A549 (cell line): ENCODE measurements at regions of chr22 and their contacts with region 1.

Region 1: DNA sequence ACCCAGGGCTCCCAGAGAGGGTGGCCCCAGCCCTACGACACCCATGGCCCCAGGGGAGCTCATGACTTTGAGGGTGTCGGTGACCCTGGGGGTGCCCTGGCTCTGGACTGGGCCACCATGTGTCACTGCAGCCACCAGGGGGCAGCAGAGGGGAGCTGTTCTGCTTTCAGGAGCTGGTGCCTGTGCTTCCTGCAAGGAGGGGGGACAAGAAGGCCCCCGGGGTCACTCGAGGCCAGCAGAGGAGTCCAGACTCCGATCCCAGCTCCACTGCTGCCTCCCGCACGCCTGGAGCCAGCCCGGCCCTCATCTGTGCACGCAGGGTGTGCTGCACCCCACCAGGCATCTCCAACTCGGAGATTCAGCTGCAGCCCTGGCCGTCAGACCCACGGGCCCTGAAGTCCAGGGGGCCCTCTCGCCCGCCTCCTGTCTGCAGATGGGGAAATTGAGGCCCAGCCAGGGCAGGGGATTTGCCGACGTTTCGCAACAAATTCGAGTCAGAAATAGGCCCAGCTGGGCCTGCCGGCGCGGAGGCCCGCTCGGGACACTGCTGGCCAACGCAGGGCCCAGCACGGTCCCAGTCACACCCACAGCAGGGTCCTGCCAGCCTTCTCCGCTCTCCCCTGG is 29.5 kb upstream of the WNT7B start:
- DNase-seq: peak; percentile 80 to 85
- ATAC-seq: peak; percentile 71 to 89
- H3K4me3 ChIP-seq: peak overlapping the region; percentile 35
- H3K27ac ChIP-seq: peak overlapping the region; percentile 94 to 99
- H3K4me1 ChIP-seq: peaks cover 31% of the 10 kb centered on the region
- CTCF ChIP-seq: peak; percentile 79
- EP300 ChIP-seq: no peak
- POLR2A ChIP-seq: no peak
- RAD21 ChIP-seq: peak; percentile 79 to 80

Region 2: GRCh38 chr22:45867118-45867905 is 139.2 kb before region 1 on chr22:
- CTCF ChIA-PET with region 1: no interaction called
- POLR2A ChIA-PET with region 1: no interaction called
- DNase-seq: no peak
- ATAC-seq: no peak
- H3K4me3 ChIP-seq: no peak overlapping the region
- H3K27ac ChIP-seq: no peak overlapping the region
- H3K4me1 ChIP-seq: peaks cover 18% of the 10 kb centered on the region
- CTCF ChIP-seq: no peak
- EP300 ChIP-seq: no peak
- POLR2A ChIP-seq: no peak
- RAD21 ChIP-seq: no peak

Region 3: DNA sequence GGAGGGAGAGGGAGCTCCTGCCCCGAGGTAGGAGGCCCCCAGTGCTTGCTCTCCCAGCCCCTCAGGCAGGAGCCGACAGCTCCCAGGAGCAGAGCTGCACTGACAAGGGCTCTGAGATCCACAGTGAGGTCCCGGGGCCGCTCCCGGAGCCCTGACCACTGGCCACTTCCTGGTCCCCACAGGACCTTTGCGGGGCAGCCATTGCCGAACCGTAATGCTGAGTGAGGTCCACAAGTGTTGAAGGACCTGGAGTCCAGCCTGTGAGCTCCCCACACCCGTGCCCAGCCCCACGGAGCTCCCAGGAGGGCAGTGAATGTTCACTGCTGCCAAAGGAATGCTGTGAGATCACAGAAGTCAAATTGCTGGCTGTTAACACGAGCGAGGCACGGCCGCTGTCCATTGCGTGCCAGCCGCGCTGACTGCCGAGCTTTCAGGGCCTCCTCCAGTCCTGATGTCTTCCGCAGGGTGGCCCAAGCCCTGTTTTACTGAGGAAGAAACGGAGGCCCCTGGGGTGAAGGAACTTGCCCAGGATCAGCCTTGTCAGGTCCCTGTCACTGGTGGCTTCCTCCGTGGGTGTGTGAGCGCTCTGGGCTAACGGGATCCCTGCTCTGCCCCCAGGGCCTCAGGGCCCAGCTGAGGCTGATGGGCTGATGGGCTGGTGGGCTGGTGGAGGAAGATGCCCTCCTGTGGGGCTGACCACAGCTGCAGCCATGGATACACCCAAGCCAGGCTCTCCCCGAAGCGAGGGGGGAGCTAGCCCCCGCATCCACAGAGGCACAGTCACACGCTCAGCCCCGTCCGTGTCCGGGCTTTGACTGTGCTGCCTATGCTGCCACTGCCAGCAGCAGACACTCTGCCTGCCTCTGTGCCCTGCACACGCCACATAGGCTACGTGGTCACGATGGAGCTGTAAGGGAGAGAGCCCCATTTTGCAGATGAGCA is 100.3 kb before region 1 on chr22:
- CTCF ChIA-PET with region 1: no interaction called
- POLR2A ChIA-PET with region 1: no interaction called
- DNase-seq: no peak
- ATAC-seq: no peak
- H3K4me3 ChIP-seq: no peak overlapping the region
- H3K27ac ChIP-seq: peak overlapping the region in 1 of 2 experiments; percentile 63; a peak in 3 of 6 replicates
- H3K4me1 ChIP-seq: peaks cover 28% of the 10 kb centered on the region
- CTCF ChIP-seq: no peak
- EP300 ChIP-seq: no peak
- POLR2A ChIP-seq: no peak
- RAD21 ChIP-seq: no peak

Region 4: DNA sequence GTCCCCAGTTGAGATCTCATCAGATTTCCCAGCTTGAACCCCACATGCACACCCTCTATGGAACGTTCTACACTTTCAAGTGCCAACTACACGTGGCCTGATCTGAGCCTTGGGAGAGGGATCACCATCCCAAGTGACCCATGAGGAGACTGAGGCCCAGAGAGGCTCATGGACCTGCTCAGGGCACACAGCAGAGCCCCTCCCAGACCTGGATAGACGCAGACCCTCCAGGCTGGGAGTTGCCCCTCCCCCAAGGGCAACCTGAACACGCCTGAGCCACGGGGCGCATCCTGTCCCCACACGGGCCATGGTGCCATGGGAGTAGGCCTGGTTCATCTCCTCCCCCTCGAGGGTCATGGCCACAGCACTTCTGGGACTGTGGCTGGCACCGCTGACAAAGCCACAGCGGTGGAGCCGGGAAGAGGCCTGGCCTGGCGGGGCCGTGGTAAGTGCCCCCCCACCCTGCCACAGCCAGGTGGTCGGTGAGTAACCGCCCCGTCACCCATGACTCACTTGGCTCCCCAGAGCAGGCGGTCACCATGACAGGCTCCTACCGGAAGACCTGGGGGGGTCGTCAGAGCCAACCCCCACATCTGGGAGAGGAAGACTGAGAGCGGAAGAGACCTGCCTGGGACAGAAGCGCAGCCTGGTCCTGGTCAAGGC is 37.6 kb before region 1 on chr22:
- CTCF ChIA-PET with region 1: no interaction called
- POLR2A ChIA-PET with region 1: no interaction called
- DNase-seq: peak in 1 of 2 experiments; percentile 77
- ATAC-seq: peak in 1 of 2 experiments; percentile 59; a peak in 3 of 6 replicates
- H3K4me3 ChIP-seq: peak overlapping the region; percentile 17; the same call in 1 of the 3 replicates
- H3K27ac ChIP-seq: peak overlapping the region; percentile 77 to 88
- H3K4me1 ChIP-seq: peaks cover 96% of the 10 kb centered on the region
- CTCF ChIP-seq: no peak
- EP300 ChIP-seq: peak; percentile 24 to 53; a peak in 2 of 5 replicates
- POLR2A ChIP-seq: no peak
- RAD21 ChIP-seq: 0 out of 5 replicates have a peak, but pooled peaks of 1 of the 2 experiments have one; percentile 43

Region 5: DNA sequence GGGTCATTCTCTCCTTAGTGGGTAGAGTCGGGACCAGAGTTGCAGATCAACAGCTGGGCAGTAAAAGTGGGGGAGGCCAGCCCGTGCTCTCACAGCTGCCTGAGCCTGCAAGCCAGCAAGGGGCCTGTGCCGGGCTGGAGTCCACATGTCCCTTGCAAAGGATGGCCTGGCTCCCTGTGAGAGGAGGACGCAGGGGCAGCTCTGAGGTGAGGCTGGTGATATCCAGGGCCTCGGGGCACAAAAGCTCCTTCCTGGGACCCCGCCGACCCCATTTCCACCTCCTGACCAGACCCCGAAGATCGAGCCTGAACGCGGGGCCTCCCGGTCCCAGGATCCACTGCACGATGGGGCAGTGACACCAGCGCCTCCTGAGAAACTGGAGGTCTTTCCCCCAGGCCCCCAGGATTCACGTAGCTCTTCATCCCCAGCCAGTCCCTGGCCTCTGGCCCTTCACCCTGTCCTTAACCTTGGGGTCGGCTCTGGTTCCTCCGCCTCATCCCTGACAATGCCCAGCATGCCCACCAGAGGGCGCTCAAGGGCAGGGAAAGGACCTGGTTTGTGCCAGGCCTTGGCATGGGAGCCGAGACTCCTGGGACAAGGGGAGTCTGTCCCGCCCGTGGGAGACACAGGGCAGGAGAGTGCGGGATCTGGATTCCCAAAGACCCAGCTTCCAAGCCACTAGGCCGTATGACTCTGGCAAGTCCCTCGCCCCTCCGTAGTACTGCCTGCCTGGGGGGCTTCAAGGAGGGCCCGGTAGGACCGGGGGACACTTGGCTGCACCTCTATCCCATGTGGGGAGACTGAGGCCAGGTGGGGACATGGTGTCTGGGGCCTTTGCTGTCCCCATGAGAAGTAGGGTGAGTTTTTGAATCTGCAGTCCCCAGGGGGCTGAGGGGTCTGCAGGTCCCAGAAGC is 11.7 kb before region 1 on chr22:
- CTCF ChIA-PET with region 1: interaction called, 52 read pairs
- POLR2A ChIA-PET with region 1: no interaction called
- DNase-seq: peak; percentile 49 to 55
- ATAC-seq: peak; percentile 74 to 90
- H3K4me3 ChIP-seq: no peak overlapping the region
- H3K27ac ChIP-seq: peak overlapping the region; percentile 51 to 72; a peak in 4 of 6 replicates
- H3K4me1 ChIP-seq: no peaks in the 10 kb centered on the region
- CTCF ChIP-seq: peak; percentile 75
- EP300 ChIP-seq: no peak
- POLR2A ChIP-seq: no peak
- RAD21 ChIP-seq: peak; percentile 88 to 93

Region 6: DNA sequence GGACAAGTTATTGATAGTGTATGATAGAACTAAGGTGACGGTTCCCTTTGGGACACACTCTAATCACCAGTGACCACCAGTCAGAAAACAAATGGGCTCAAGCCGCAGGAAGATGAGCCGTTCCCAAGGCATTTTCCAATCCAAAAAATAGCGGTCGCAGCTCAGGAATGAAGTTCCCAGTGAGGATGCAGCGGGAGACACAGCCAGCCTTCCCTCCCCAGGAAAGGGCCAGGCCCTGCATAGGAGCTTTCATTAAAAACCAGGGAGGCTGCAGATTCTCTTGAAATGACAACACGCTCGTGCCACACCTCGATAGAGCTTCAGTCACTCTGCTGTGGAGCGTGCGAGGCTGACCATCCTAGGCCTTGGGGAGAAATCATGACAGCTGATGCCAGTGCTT is 36.3 kb after region 1 on chr22:
- CTCF ChIA-PET with region 1: interaction called, 66 read pairs
- POLR2A ChIA-PET with region 1: no interaction called
- DNase-seq: no peak
- ATAC-seq: no peak
- H3K4me3 ChIP-seq: no peak overlapping the region
- H3K27ac ChIP-seq: no peak overlapping the region
- H3K4me1 ChIP-seq: no peaks in the 10 kb centered on the region
- CTCF ChIP-seq: no peak
- EP300 ChIP-seq: no peak
- POLR2A ChIP-seq: no peak
- RAD21 ChIP-seq: no peak

Region 7: GRCh38 chr22:46071451-46072109 is 65.1 kb after region 1 on chr22:
- CTCF ChIA-PET with region 1: interaction called, 17 read pairs
- POLR2A ChIA-PET with region 1: interaction called, 18 read pairs
- DNase-seq: peak in 1 of 2 experiments; percentile 92
- ATAC-seq: peak; percentile 9 to 37; a peak in 4 of 6 replicates
- H3K4me3 ChIP-seq: peak overlapping the region; percentile 73
- H3K27ac ChIP-seq: peak overlapping the region; percentile 99 to 100
- H3K4me1 ChIP-seq: peaks cover 17% of the 10 kb centered on the region
- CTCF ChIP-seq: no peak
- EP300 ChIP-seq: no peak
- POLR2A ChIP-seq: peak; percentile 87
- RAD21 ChIP-seq: no peak

Region 8: DNA sequence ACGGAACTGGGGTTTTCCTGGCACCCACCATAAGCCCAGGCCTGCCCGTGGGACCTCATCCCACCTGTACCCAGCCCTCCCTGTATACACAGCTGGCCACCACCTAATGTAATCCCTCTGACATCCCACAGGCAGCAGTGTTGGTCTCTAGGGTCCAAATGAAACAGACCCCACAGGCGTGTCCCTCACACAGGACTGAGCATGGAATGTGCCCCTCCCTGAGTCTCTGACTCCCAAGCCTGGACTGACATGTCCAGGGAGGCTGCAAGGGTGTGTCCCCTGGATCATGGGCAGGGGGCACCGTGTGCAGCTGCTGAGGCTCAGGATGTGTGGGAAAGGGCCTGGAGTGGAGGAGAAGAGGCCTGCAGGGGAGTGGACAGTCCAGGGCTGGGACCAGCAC is 93.2 kb after region 1 on chr22:
- CTCF ChIA-PET with region 1: interaction called, 10 read pairs
- POLR2A ChIA-PET with region 1: no interaction called
- DNase-seq: no peak
- ATAC-seq: peak in 1 of 2 experiments; percentile 14; a peak in 3 of 6 replicates
- H3K4me3 ChIP-seq: no peak overlapping the region
- H3K27ac ChIP-seq: peak overlapping the region in 1 of 2 experiments; percentile 64; a peak in 4 of 6 replicates
- H3K4me1 ChIP-seq: peaks cover 84% of the 10 kb centered on the region
- CTCF ChIP-seq: no peak
- EP300 ChIP-seq: no peak
- POLR2A ChIP-seq: no peak
- RAD21 ChIP-seq: no peak

Region 9: DNA sequence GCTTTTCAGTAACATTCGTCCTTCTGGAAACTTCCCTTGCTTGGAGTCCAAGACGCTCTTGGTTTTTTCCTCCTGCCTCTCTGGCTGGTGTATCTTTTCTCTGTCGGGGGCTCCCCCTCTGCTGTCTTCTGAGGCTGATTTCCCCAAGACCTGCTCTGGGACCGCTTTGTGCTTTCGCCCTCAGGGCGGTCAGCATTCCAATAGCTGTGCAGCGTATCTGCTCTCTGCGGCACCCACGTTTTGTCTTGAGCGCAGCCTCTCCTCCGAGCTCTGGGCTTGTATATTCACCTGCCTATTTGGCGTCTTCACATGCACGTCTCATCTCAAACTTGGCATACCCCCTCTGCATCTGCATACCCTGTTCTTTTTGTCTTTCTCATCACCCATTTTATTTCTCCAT is 292.6 kb after region 1 on chr22:
- CTCF ChIA-PET with region 1: interaction called, 10 read pairs
- POLR2A ChIA-PET with region 1: no interaction called
- DNase-seq: no peak
- ATAC-seq: no peak
- H3K4me3 ChIP-seq: no peak overlapping the region
- H3K27ac ChIP-seq: no peak overlapping the region
- H3K4me1 ChIP-seq: peaks cover 11% of the 10 kb centered on the region; the same call in 2 of the 3 replicates
- CTCF ChIP-seq: no peak
- EP300 ChIP-seq: no peak
- POLR2A ChIP-seq: no peak
- RAD21 ChIP-seq: no peak

Region 10: DNA sequence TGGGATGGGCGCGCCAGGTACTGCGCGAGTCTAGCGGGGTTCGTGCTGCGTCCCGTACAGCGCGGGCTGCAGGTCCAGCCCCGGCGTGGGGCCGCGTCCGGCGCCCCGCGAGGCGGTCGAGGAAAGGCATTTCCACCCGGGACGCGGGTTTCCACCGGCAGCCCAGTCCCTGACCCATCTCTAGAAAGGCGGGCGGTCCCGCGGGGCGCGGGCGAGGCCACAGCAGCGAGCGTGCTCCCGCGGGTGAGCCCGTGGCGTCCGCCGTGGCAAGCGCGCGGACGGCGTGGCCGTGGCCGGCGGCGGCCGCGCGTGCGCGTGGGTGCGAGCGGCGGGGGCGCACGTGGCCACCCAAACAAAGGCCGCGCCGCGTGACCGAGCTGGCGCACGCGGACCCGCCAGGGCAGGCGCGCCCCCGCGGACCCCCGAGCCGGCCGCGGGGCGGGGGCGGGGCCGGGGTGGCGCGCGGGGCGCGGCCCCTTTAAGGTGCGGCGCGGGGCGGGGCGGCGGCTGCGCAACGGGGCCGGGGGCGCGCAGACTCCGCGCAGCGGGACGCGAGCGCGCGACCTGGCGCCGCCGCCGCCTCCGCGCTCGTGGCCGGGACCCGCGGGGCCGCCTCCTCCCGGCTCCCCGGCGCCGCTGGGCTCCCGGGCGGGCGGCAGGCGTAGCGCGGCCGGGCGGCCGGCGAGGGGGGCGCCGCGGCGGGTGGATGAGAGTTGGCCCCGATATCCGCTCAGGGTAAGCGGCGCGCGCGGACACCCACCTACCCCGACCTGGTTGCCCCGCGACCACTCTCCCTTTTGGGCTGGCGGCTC is 570.3 kb after region 1 on chr22:
- CTCF ChIA-PET with region 1: no interaction called
- POLR2A ChIA-PET with region 1: no interaction called
- DNase-seq: peak in 1 of 2 experiments; percentile 23
- ATAC-seq: peak; percentile 30 to 47; a peak in 4 of 6 replicates
- H3K4me3 ChIP-seq: peak overlapping the region; percentile 90
- H3K27ac ChIP-seq: peak overlapping the region; percentile 90 to 99
- H3K4me1 ChIP-seq: peaks cover 50% of the 10 kb centered on the region
- CTCF ChIP-seq: no peak
- EP300 ChIP-seq: no peak
- POLR2A ChIP-seq: peak; percentile 6; the same call in 1 of the 2 replicates
- RAD21 ChIP-seq: no peak